B cell (primary cell): ENCODE measurements at regions of chr1 and their contacts with region 1.

Region 1: DNA sequence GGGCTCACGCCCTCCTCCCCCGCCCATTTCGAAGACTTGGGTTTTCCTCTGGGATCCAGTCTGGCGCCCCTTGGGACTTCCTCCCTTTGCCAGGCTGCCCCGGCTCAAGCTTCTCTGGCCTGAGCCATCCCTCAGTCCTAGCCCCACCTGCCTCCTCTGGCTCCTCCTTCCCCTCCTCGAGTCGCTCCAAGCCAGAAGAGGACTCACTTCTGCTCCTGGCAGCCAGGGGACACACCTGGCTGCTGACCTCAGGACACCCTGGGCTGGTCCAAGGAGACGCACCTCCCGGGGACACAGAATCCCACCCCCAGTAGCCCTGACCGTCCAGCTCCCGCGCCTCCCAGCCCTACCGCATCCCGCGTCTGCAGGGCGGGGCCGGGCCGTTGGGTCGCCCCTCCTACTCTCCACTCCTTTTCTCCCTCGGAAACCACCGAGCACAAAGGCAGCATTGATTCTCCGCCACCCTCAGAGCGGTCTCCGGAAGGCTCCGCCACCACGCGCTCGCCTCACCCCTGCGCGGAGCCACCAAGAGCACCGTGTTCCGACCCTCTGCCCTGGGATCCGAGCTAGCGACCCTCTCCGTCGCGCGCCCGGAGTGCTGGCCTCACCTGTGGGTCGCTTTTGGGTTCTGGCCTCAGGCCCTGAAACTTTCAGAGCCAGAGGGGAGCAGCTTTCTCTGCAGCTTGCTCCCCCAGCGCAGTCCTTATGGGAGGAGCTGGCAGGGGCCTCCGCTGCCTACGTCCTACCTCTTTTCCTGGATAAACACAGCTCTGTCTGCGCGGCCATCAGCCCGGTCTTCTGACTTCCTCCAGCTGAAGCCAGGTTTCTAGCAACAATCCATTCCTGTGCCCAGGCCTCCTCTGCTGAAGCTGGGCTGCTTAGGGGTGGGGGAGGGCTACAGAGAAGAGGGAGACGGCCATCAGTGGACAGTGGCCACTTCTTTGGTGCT is at the start of gene C2CD4D:
- DNase-seq: peak; percentile 78
- ATAC-seq: peak; percentile 53
- H3K4me3 ChIP-seq: peak within 1 kb of the TSS in 4 of 5 experiments; percentile 36 to 56 (median 44)
- H3K4me3 Mint-ChIP-seq: peak within 1 kb of the TSS; percentile 87
- H3K27ac ChIP-seq: no peak within 1 kb of the TSS
- H3K27ac Mint-ChIP-seq: peak within 1 kb of the TSS; percentile 81
- H3K4me1 ChIP-seq: peaks cover 36 to 41% of the 10 kb centered on the region in 2 donors
- H3K4me1 Mint-ChIP-seq: peaks cover 38% of the 10 kb centered on the region
- H3K27me3 ChIP-seq: peaks cover 0 to 20% (median 7%) of the 10 kb centered on the region in 4 experiments
- H3K27me3 Mint-ChIP-seq: peaks cover 10% of the 10 kb centered on the region
- CTCF ChIP-seq: no peak
- total RNA-seq, gene C2CD4D: not detected in 2 replicates

Region 2: DNA sequence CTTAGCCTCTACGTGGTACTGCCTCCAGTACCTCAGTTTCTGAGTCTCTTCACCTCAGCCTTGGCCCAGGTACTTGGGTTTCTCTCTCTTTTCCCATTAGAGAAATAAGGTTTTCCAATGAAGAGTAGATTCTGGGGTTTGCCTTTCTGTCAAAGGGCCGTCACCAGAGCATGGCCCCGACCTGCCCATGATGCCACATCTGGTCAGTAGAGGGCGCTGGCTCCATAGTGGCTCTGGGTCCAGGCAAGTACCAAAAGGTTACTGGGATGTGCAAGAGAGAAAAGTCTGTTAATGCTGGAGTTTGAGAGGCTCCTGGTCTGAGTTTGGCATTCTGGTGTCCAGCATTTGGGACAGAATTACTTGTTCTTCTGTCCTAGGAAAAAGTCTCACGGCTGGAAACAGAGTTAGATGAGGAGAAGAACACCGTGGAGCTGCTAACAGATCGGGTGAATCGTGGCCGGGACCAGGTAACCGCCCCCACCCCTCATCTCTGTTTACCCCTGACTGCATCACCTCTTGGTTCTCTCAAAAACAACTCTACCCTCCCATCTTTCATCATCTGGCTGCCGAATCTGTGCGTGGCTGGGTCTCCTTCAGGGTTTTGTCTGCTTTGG is 305.0 kb before region 1 on chr1:
- CTCF ChIA-PET with region 1: interaction called, 8 read pairs
- POLR2A ChIA-PET with region 1: no interaction called
- intact Hi-C with region 1: loop called (anchors 1 kb)
- DNase-seq: peak; percentile 72
- ATAC-seq: peak; percentile 67
- H3K4me3 ChIP-seq: no peak overlapping the region
- H3K4me3 Mint-ChIP-seq: no peak overlapping the region
- H3K27ac ChIP-seq: no peak overlapping the region
- H3K27ac Mint-ChIP-seq: no peak overlapping the region
- H3K4me1 ChIP-seq: peaks cover 5 to 7% of the 10 kb centered on the region in 2 donors
- H3K4me1 Mint-ChIP-seq: peaks cover 4% of the 10 kb centered on the region
- H3K27me3 ChIP-seq: no peaks in the 10 kb centered on the region
- H3K27me3 Mint-ChIP-seq: peaks cover 3% of the 10 kb centered on the region
- CTCF ChIP-seq: peak; percentile 78

Region 3: GRCh38 chr1:151720974-151721787 is 118.5 kb before region 1 on chr1 and contains the start of gene RIIAD1:
- CTCF ChIA-PET with region 1: no interaction called
- POLR2A ChIA-PET with region 1: no interaction called
- intact Hi-C with region 1: loop called (anchors 10 kb)
- DNase-seq: peak; percentile 65
- ATAC-seq: peak; percentile 93
- H3K4me3 ChIP-seq: peak within 1 kb of the TSS; percentile 47 to 68 (median 58)
- H3K4me3 Mint-ChIP-seq: peak within 1 kb of the TSS; percentile 85
- H3K27ac ChIP-seq: peak within 1 kb of the TSS; percentile 38
- H3K27ac Mint-ChIP-seq: peak within 1 kb of the TSS; percentile 12
- H3K4me1 ChIP-seq: peaks cover 20 to 27% of the 10 kb centered on the region in 2 donors
- H3K4me1 Mint-ChIP-seq: peaks cover 27% of the 10 kb centered on the region
- H3K27me3 ChIP-seq: peaks cover 0 to 57% (median 32%) of the 10 kb centered on the region in 4 experiments
- H3K27me3 Mint-ChIP-seq: peaks cover 58% of the 10 kb centered on the region
- CTCF ChIP-seq: no peak
- total RNA-seq, gene RIIAD1: not detected in 2 replicates